Mammary epithelial cell (primary cell): ENCODE measurements at regions of chr7 and their contacts with region 1.

Region 1: GRCh38 chr7:72785166-72785955 is 42.6 kb downstream of the TYW1B start:
- DNase-seq: no peak
- H3K4me3 ChIP-seq: no peak overlapping the region
- H3K27ac ChIP-seq: no peak overlapping the region
- H3K4me1 ChIP-seq: peaks cover 6% of the 10 kb centered on the region
- H3K27me3 ChIP-seq: no peaks in the 10 kb centered on the region
- CTCF ChIP-seq: no peak

Region 2: DNA sequence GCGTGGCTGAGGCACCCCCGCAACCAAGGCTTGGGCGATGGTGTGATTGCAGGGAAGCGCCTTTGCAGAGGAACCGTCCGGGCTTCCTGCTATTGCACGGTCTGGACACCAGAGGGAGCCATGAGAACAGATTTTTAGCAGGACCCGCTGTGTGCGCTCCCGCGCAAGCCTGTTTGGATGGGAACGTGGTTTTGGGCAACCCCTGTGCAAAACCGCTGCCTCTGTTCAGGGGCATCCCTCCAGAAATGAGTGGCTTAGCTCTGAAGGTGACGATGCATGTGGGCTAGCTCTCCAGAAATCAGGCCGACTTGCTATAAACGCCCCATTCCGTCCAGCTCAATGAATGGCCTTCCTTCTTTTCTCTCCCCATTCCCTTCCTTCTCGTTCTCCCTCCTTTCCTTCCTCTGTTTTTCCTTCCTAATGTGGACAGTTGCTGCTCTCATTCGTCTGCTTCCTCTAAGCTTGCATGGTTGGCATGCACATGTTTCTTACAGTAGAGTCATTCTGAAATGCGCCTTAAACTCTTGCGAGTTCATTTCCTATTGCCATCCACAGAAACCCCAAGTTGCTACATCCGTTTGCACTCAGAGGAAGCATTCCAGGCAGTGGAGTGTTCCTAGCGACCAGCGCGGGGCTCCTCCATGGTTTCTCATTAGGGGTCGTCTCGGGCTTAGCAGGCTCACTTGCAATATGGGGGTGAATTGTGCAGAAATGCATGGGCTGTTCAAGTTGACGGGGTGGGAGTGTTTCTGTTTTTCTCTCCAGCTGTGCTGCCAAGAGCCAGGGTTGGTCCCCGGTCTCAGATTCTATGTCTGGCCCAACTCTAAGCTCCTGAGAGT is 1955.9 kb before region 1 on chr7:
- CTCF ChIA-PET with region 1: no interaction called
- dilution Hi-C with region 1: no loop called
- in situ Hi-C with region 1: loop called in 1 of 2 experiments (anchors 25 kb)
- intact Hi-C with region 1: no loop called
- DNase-seq: peak; percentile 25
- H3K4me3 ChIP-seq: no peak overlapping the region
- H3K27ac ChIP-seq: no peak overlapping the region
- H3K4me1 ChIP-seq: no peaks in the 10 kb centered on the region
- H3K27me3 ChIP-seq: no peaks in the 10 kb centered on the region
- CTCF ChIP-seq: peak; percentile 90 to 91

Region 3: DNA sequence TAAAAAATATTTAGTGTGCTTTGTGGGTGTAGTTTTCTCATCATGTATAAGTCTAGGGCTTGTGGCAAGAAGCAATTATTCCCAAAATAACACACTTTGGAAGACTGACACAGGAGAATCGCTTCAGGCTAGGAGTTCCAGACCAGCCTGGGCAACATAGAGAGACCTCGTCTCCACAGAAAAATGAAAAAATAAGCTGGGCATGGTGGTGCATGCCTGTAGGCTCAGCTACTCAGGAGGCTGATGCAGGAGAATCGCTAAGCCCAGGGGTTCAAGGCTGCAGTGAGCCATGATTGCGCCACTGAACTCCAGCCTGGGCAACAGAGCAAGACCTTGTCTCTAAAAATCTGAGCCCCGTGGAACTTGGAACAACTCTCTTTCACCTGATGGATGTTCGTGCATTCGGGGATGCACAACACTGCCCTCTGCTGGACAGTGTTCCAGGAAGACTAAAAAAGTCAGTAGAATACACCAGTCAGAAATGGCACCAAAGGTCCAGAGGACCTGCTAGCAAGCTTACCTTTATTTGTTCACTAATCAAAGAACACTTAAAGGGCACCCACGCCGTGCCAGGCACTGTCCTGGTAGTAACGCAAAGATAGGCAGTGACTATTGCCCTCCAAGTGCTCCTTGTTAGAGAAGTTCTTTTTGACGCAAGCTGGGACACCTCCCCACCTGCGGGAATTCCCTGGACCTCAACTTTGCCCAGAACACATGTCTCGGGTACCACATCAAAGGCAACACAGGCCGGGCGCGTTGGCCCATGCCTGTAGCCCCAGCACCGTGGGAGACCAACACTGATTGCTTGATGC is 291.3 kb before region 1 on chr7:
- CTCF ChIA-PET with region 1: interaction called, 16 read pairs
- dilution Hi-C with region 1: no loop called
- in situ Hi-C with region 1: no loop called
- intact Hi-C with region 1: loop called (anchors 10 kb)
- DNase-seq: peak; percentile 42
- H3K4me3 ChIP-seq: no peak overlapping the region
- H3K27ac ChIP-seq: no peak overlapping the region
- H3K4me1 ChIP-seq: no peaks in the 10 kb centered on the region
- H3K27me3 ChIP-seq: no peaks in the 10 kb centered on the region
- CTCF ChIP-seq: peak; percentile 46 to 69

Region 4: DNA sequence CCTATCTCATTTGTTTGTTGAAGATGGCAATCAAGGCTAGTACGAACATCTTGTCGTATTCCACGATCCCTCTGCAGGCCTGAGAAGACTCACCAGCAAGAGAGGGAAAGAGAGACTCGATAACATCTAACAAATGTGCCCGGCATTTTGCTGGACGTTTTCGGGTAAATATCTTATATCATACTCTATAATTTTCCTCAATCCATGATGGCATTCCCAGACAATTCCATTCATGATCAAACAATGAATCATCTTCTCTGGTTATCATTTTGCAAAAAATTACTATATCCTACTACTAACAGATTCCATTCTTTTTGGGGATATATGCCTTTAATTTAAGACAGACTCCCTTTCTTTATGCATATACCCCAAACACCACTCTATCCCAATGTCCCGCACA is 75.5 kb before region 1 on chr7:
- CTCF ChIA-PET with region 1: no interaction called
- dilution Hi-C with region 1: no loop called
- in situ Hi-C with region 1: no loop called
- intact Hi-C with region 1: no loop called
- DNase-seq: no peak
- H3K4me3 ChIP-seq: no peak overlapping the region
- H3K27ac ChIP-seq: no peak overlapping the region
- H3K4me1 ChIP-seq: no peaks in the 10 kb centered on the region
- H3K27me3 ChIP-seq: no peaks in the 10 kb centered on the region
- CTCF ChIP-seq: no peak